GM12878 (cell line): ENCODE measurements at regions of chr11 and their contacts with region 1.

Region 1: DNA sequence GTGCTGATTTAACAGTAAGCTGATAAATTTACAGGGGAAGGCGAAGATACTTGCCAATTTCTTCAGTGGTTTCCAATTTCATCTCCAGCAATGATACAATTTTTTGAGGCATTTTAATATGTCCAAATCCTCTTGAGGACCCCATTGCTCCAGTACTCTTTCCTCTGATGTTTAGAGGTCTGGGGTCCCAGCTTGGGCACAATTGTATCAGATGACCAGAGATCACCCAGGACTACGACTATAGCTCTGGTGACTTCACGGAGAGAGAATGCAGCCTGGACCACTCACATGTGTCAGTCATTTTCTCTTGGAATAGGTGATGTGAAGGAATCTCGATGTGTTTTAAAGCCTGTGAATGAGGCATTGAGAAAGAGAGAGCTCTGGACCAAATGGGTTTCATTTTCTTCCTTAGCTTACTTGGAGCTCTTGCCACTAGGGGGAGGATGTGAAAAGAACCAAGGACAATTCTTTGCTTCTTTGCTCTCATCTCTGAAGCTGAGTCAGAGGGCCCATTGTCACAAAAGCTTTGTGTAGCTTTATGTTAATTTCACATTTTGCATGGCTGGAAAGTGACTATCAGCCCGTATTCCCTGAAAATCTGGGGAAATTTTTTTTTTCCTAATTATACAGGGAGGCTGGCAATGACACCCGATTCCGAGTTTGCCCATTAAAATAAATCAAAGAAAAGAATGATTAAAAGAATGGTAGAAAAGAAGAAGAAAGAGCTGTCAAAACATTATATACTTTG is 6.7 kb upstream of the CCDC90B start:
- DNase-seq: no peak
- ATAC-seq: peak; percentile 86
- H3K4me3 ChIP-seq: no peak overlapping the region
- H3K27ac ChIP-seq: no peak overlapping the region
- H3K4me1 ChIP-seq: peaks cover 12% of the 10 kb centered on the region; the same call in 1 of the 2 replicates
- H3K27me3 ChIP-seq: no peaks in the 10 kb centered on the region
- CTCF ChIP-seq: peak; percentile 65 to 74 (median 70)
- EP300 ChIP-seq: no peak
- POLR2A ChIP-seq: no peak
- RAD21 ChIP-seq: peak; percentile 60

Region 2: GRCh38 chr11:82969811-82970210 is 323.1 kb before region 1 on chr11:
- CTCF ChIA-PET with region 1: no interaction called
- POLR2A ChIA-PET with region 1: no interaction called
- RAD21 ChIA-PET with region 1: no interaction called
- SMC1A ChIA-PET with region 1: no interaction called
- in situ Hi-C with region 1: no loop called
- intact Hi-C with region 1: no loop called
- DNase-seq: peak; percentile 84
- ATAC-seq: peak; percentile 83
- H3K4me3 ChIP-seq: no peak overlapping the region
- H3K27ac ChIP-seq: peak overlapping the region; percentile 94
- H3K4me1 ChIP-seq: peaks cover 41% of the 10 kb centered on the region
- H3K27me3 ChIP-seq: no peaks in the 10 kb centered on the region
- CTCF ChIP-seq: no peak
- EP300 ChIP-seq: peak; percentile 99 to 100
- POLR2A ChIP-seq: no peak
- RAD21 ChIP-seq: no peak

Region 3: GRCh38 chr11:83272627-83273026 is 20.3 kb before region 1 on chr11:
- CTCF ChIA-PET with region 1: interaction called, 11 read pairs
- POLR2A ChIA-PET with region 1: interaction called, 3 read pairs
- RAD21 ChIA-PET with region 1: interaction called, 3 read pairs
- SMC1A ChIA-PET with region 1: interaction called, 7 read pairs
- in situ Hi-C with region 1: no loop called
- intact Hi-C with region 1: no loop called
- DNase-seq: no peak
- ATAC-seq: no peak
- H3K4me3 ChIP-seq: no peak overlapping the region
- H3K27ac ChIP-seq: no peak overlapping the region
- H3K4me1 ChIP-seq: no peaks in the 10 kb centered on the region
- H3K27me3 ChIP-seq: no peaks in the 10 kb centered on the region
- CTCF ChIP-seq: no peak
- EP300 ChIP-seq: no peak
- POLR2A ChIP-seq: no peak
- RAD21 ChIP-seq: no peak

Region 4: GRCh38 chr11:83306200-83307080 is 13.6 kb after region 1 on chr11:
- CTCF ChIA-PET with region 1: interaction called, 61 read pairs
- POLR2A ChIA-PET with region 1: no interaction called
- RAD21 ChIA-PET with region 1: interaction called, 3 read pairs
- SMC1A ChIA-PET with region 1: interaction called, 9 read pairs
- in situ Hi-C with region 1: no loop called
- intact Hi-C with region 1: no loop called
- DNase-seq: no peak
- ATAC-seq: peak; percentile 38; the same call in 1 of the 3 replicates
- H3K4me3 ChIP-seq: no peak overlapping the region
- H3K27ac ChIP-seq: no peak overlapping the region
- H3K4me1 ChIP-seq: no peaks in the 10 kb centered on the region
- H3K27me3 ChIP-seq: no peaks in the 10 kb centered on the region
- CTCF ChIP-seq: no peak
- EP300 ChIP-seq: no peak
- POLR2A ChIP-seq: no peak
- RAD21 ChIP-seq: no peak

Region 5: GRCh38 chr11:83312430-83312829 is 19.5 kb after region 1 on chr11:
- CTCF ChIA-PET with region 1: interaction called, 61 read pairs
- POLR2A ChIA-PET with region 1: no interaction called
- RAD21 ChIA-PET with region 1: interaction called, 4 read pairs
- SMC1A ChIA-PET with region 1: interaction called, 3 read pairs
- in situ Hi-C with region 1: no loop called
- intact Hi-C with region 1: no loop called
- DNase-seq: no peak
- ATAC-seq: no peak
- H3K4me3 ChIP-seq: no peak overlapping the region
- H3K27ac ChIP-seq: no peak overlapping the region
- H3K4me1 ChIP-seq: no peaks in the 10 kb centered on the region
- H3K27me3 ChIP-seq: no peaks in the 10 kb centered on the region
- CTCF ChIP-seq: no peak
- EP300 ChIP-seq: no peak
- POLR2A ChIP-seq: no peak
- RAD21 ChIP-seq: no peak

Region 6: GRCh38 chr11:83671289-83671688 is 378.4 kb after region 1 on chr11:
- CTCF ChIA-PET with region 1: interaction called, 8 read pairs
- POLR2A ChIA-PET with region 1: no interaction called
- RAD21 ChIA-PET with region 1: no interaction called
- SMC1A ChIA-PET with region 1: no interaction called
- in situ Hi-C with region 1: no loop called
- intact Hi-C with region 1: loop called (anchors 1 kb)
- DNase-seq: no peak
- ATAC-seq: no peak
- H3K4me3 ChIP-seq: no peak overlapping the region
- H3K27ac ChIP-seq: no peak overlapping the region
- H3K4me1 ChIP-seq: no peaks in the 10 kb centered on the region
- H3K27me3 ChIP-seq: no peaks in the 10 kb centered on the region
- CTCF ChIP-seq: peak in 1 of 3 experiments; percentile 33; a peak in 2 of 6 replicates
- EP300 ChIP-seq: no peak
- POLR2A ChIP-seq: no peak
- RAD21 ChIP-seq: peak; percentile 60

Region 7: DNA sequence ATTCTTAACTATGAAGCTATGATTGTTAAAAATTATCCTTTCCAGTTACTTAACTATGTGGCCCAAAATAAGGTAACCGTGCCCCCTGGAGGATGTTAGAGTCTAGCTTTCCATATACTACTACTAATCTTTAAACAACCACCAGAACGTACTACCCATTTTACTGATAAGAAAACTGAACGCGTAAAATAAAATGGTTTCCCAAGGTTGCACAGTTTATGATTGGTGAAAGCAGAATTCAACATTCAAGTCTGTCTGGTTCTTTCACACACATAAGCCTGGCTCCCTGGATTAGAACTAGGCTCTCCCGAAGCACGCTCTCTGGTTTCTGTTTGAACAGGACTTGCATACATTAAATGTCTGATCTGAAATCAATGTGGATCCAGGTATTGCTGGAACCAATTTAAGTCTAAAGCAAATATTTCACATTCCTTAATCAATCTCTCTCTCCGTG is 431.2 kb after region 1 on chr11:
- CTCF ChIA-PET with region 1: interaction called, 16 read pairs
- POLR2A ChIA-PET with region 1: no interaction called
- RAD21 ChIA-PET with region 1: interaction called, 35 read pairs
- SMC1A ChIA-PET with region 1: interaction called, 17 read pairs
- in situ Hi-C with region 1: no loop called
- intact Hi-C with region 1: loop called (anchors 2 kb)
- DNase-seq: peak; percentile 23
- ATAC-seq: peak; percentile 78
- H3K4me3 ChIP-seq: no peak overlapping the region
- H3K27ac ChIP-seq: no peak overlapping the region
- H3K4me1 ChIP-seq: peaks cover 11% of the 10 kb centered on the region; the same call in 1 of the 2 replicates
- H3K27me3 ChIP-seq: 0 out of 4 replicates have a peak, but pooled peaks cover 0 to 2% of the 10 kb centered on the region in 2 experiments
- CTCF ChIP-seq: peak; percentile 33 to 56 (median 51); a peak in 5 of 6 replicates
- EP300 ChIP-seq: no peak
- POLR2A ChIP-seq: no peak
- RAD21 ChIP-seq: peak; percentile 76